B cell (primary cell): ENCODE measurements at regions of chr2 and their contacts with region 1.

Region 1: DNA sequence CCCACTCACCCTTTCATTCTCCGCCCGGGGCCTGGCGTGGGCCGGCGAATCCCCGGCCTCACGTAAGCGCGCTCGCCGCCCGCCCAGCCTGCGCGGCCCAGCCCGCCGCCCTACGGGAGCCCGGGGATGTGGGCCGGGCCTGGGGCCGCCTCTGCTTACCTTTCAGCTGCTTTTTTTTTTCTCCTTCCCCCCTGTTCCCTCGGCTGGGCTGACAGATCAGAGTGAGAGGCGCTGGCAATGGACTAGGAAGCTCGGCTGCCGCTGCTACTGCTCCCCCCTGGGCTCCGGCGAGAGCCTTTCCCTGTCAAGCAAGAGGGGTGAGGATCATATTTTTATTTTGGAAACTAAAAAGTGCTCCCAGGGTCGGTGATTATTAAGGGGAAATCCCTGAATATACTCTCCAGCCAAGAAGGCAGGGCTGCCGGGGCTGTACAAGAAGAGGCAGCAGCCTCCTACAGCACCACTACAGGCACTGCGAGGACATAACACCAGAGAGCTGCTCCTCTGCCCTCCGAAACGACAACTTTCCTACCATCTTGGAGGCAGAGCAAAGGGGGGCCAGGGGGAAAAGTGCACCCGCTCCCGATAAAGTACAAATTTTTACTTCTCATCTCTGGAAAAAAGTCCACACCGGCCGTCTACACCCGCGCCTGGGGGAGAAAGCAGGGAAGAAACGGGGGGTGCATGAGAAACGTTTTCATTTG is at the start of gene INO80D:
- DNase-seq: peak; percentile 91
- ATAC-seq: peak; percentile 84
- H3K4me3 ChIP-seq: peak within 1 kb of the TSS; percentile 68 to 95 (median 88)
- H3K4me3 Mint-ChIP-seq: peak within 1 kb of the TSS; percentile 99
- H3K27ac ChIP-seq: peak within 1 kb of the TSS; percentile 96 to 97
- H3K27ac Mint-ChIP-seq: peak within 1 kb of the TSS; percentile 100
- H3K4me1 ChIP-seq: peaks cover 19% of the 10 kb centered on the region in 2 donors
- H3K4me1 Mint-ChIP-seq: peaks cover 43% of the 10 kb centered on the region
- H3K27me3 ChIP-seq: no peaks in the 10 kb centered on the region
- H3K27me3 Mint-ChIP-seq: no peaks in the 10 kb centered on the region
- CTCF ChIP-seq: peak; percentile 67
- total RNA-seq, gene INO80D: 61.2 and 69.1 TPM in 2 replicates

Region 2: DNA sequence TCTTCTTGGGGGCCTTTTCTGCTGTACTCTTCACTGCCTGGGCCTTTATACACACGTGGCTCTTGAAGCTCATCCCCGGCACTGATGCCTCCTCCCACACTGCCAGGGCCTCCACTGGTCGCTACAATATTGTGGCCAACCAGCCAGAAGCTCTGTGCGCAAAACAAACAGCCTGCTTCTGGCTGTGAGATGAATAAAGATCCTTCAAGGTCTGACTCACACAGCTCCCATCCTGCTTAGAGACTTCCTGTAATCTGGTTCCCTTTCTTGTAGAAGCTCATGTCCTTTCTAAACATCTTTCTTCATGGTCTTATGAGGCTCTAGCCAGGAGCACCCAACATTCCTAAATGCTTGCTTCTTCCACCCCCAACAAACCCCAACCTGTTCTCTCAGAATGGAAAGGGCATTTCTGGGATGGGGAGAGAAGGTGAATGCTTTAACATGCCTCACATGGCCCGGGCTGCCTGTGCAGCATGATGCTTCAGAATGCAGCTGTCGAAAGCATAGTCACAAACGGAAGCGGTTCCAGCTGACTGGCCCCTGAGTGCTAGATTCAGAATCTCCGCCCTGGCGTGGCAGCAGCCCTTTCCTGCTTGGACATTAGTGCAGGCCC is 379.0 kb before region 1 on chr2:
- CTCF ChIA-PET with region 1: no interaction called
- POLR2A ChIA-PET with region 1: interaction called, 4 read pairs
- intact Hi-C with region 1: loop called (anchors 5 kb)
- DNase-seq: peak; percentile 86
- ATAC-seq: peak; percentile 95
- H3K4me3 ChIP-seq: peak overlapping the region in 3 of 5 experiments; percentile 25 to 41 (median 30)
- H3K4me3 Mint-ChIP-seq: peak overlapping the region; percentile 84
- H3K27ac ChIP-seq: peak overlapping the region; percentile 86 to 93
- H3K27ac Mint-ChIP-seq: peak overlapping the region; percentile 99
- H3K4me1 ChIP-seq: peaks cover 41 to 45% of the 10 kb centered on the region in 2 donors
- H3K4me1 Mint-ChIP-seq: peaks cover 61% of the 10 kb centered on the region
- H3K27me3 ChIP-seq: no peaks in the 10 kb centered on the region
- H3K27me3 Mint-ChIP-seq: no peaks in the 10 kb centered on the region
- CTCF ChIP-seq: no peak

Region 3: GRCh38 chr2:205925373-205926337 is 160.2 kb before region 1 on chr2:
- CTCF ChIA-PET with region 1: no interaction called
- POLR2A ChIA-PET with region 1: no interaction called
- intact Hi-C with region 1: no loop called
- DNase-seq: peak; percentile 66
- ATAC-seq: peak; percentile 53
- H3K4me3 ChIP-seq: no peak overlapping the region
- H3K4me3 Mint-ChIP-seq: no peak overlapping the region
- H3K27ac ChIP-seq: no peak overlapping the region
- H3K27ac Mint-ChIP-seq: no peak overlapping the region
- H3K4me1 ChIP-seq: peaks cover 6 to 7% of the 10 kb centered on the region in 2 donors
- H3K4me1 Mint-ChIP-seq: peaks cover 6% of the 10 kb centered on the region
- H3K27me3 ChIP-seq: peaks cover 0 to 23% (median 14%) of the 10 kb centered on the region in 4 experiments
- H3K27me3 Mint-ChIP-seq: peaks cover 44% of the 10 kb centered on the region
- CTCF ChIP-seq: peak; percentile 76

Region 4: GRCh38 chr2:206031162-206031784 is 54.6 kb before region 1 on chr2:
- CTCF ChIA-PET with region 1: interaction called, 5 read pairs
- POLR2A ChIA-PET with region 1: interaction called, 5 read pairs
- intact Hi-C with region 1: loop called (anchors 5 kb)
- DNase-seq: no peak
- ATAC-seq: no peak
- H3K4me3 ChIP-seq: no peak overlapping the region
- H3K4me3 Mint-ChIP-seq: no peak overlapping the region
- H3K27ac ChIP-seq: no peak overlapping the region
- H3K27ac Mint-ChIP-seq: no peak overlapping the region
- H3K4me1 ChIP-seq: no peaks in the 10 kb centered on the region
- H3K4me1 Mint-ChIP-seq: peaks cover 26% of the 10 kb centered on the region
- H3K27me3 ChIP-seq: no peaks in the 10 kb centered on the region
- H3K27me3 Mint-ChIP-seq: no peaks in the 10 kb centered on the region
- CTCF ChIP-seq: no peak

Region 5: DNA sequence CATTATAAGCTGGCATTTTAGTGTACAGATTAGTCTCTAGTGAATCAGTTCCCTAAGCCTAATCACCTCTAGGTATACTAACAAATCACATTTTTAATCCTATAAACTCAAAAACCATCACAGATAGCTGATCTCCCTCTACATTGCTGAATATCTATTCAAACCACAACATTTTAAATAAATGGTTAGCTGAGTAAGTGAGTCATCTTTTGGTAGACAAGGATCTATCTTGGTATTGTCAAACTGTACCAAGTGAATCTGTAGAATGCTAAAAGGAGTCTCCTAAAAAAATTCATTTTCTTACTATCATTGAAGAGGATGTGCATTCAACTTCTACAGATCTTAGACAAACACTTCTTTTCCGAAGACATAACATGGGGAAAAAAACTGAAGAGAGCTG is 40.6 kb before region 1 on chr2:
- CTCF ChIA-PET with region 1: no interaction called
- POLR2A ChIA-PET with region 1: no interaction called
- intact Hi-C with region 1: no loop called
- DNase-seq: no peak
- ATAC-seq: no peak
- H3K4me3 ChIP-seq: no peak overlapping the region
- H3K4me3 Mint-ChIP-seq: no peak overlapping the region
- H3K27ac ChIP-seq: no peak overlapping the region
- H3K27ac Mint-ChIP-seq: no peak overlapping the region
- H3K4me1 ChIP-seq: no peaks in the 10 kb centered on the region
- H3K4me1 Mint-ChIP-seq: peaks cover 4% of the 10 kb centered on the region
- H3K27me3 ChIP-seq: no peaks in the 10 kb centered on the region
- H3K27me3 Mint-ChIP-seq: no peaks in the 10 kb centered on the region
- CTCF ChIP-seq: no peak

Region 6: GRCh38 chr2:206249714-206250591 is 164.1 kb after region 1 on chr2:
- CTCF ChIA-PET with region 1: no interaction called
- POLR2A ChIA-PET with region 1: interaction called, 11 read pairs
- intact Hi-C with region 1: loop called (anchors 10 kb)
- DNase-seq: peak; percentile 38
- ATAC-seq: no peak
- H3K4me3 ChIP-seq: peak overlapping the region; percentile 16 to 43 (median 39)
- H3K4me3 Mint-ChIP-seq: peak overlapping the region; percentile 85
- H3K27ac ChIP-seq: no peak overlapping the region
- H3K27ac Mint-ChIP-seq: peak overlapping the region; percentile 5
- H3K4me1 ChIP-seq: peaks cover 12 to 30% of the 10 kb centered on the region in 2 donors
- H3K4me1 Mint-ChIP-seq: peaks cover 26% of the 10 kb centered on the region
- H3K27me3 ChIP-seq: peaks cover 0 to 37% (median 26%) of the 10 kb centered on the region in 4 experiments
- H3K27me3 Mint-ChIP-seq: peaks cover 38% of the 10 kb centered on the region
- CTCF ChIP-seq: no peak

Region 7: DNA sequence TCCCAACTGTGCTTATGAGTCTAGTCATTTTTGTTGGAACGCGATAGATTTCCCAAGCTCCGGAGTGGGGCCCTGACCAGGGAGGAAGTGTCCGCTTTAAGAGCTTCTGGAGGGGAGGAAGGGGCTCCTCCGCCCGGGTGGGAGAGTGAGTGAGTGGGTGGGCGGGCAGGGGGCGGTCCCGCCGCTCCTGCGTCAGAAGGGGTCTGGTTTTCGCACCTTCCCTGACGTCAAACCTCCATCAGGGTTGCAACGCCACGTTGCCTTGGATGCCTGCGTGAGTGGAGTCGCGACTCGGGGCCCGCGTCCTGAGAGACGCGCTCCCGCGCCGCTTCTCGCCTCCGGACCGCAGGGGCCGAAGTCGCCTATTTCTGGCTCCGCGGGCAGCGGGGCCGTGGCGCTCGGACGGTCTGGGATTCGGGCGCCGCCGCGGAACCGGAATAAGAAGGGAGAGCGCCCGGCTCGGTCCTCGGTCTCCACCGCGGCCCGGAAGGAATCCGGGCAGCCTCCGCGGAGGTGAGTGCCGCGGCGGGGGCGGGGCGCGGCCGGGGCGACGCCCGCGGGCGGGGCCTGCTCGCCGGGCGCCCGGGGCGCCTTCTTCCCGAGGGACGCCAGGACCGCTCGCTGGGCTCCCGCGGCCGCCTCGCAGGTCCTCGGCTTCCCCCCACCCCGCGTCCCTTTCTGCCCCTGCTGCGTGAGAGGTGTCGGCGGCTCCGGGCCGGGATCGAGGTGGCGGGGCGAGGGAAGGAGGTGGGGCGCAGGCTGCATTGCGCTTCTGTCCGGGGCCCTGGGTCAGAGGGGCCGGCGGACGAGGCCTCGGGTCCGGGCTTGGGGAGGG is 188.8 kb after region 1 on chr2 and contains the start of gene ZDBF2:
- CTCF ChIA-PET with region 1: no interaction called
- POLR2A ChIA-PET with region 1: no interaction called
- intact Hi-C with region 1: loop called (anchors 10 kb)
- DNase-seq: peak; percentile 76
- ATAC-seq: peak; percentile 83
- H3K4me3 ChIP-seq: peak within 1 kb of the TSS; percentile 66 to 70 (median 67)
- H3K4me3 Mint-ChIP-seq: peak within 1 kb of the TSS; percentile 77
- H3K27ac ChIP-seq: peak within 1 kb of the TSS; percentile 39 to 78
- H3K27ac Mint-ChIP-seq: peak within 1 kb of the TSS; percentile 79
- H3K4me1 ChIP-seq: peaks cover 19 to 22% of the 10 kb centered on the region in 2 donors
- H3K4me1 Mint-ChIP-seq: peaks cover 18% of the 10 kb centered on the region
- H3K27me3 ChIP-seq: peaks cover 0 to 55% (median 24%) of the 10 kb centered on the region in 4 experiments
- H3K27me3 Mint-ChIP-seq: peaks cover 50% of the 10 kb centered on the region
- CTCF ChIP-seq: no peak
- total RNA-seq, gene ZDBF2: 16.5 and 18.7 TPM in 2 replicates

Region 8: GRCh38 chr2:206765242-206766056 is 679.6 kb after region 1 on chr2 and contains the starts of genes FASTKD2 and MDH1B:
- CTCF ChIA-PET with region 1: no interaction called
- POLR2A ChIA-PET with region 1: interaction called, 3 read pairs
- intact Hi-C with region 1: loop called (anchors 10 kb)
- DNase-seq: peak; percentile 96
- ATAC-seq: peak; percentile 85
- H3K4me3 ChIP-seq: peak within 1 kb of the TSS; percentile 63 to 96 (median 87)
- H3K4me3 Mint-ChIP-seq: peak within 1 kb of the TSS; percentile 99
- H3K27ac ChIP-seq: peak within 1 kb of the TSS; percentile 77 to 92
- H3K27ac Mint-ChIP-seq: peak within 1 kb of the TSS; percentile 97
- H3K4me1 ChIP-seq: peaks cover 14% of the 10 kb centered on the region in 2 donors
- H3K4me1 Mint-ChIP-seq: peaks cover 32% of the 10 kb centered on the region
- H3K27me3 ChIP-seq: peaks cover 0 to 17% (median 6%) of the 10 kb centered on the region in 4 experiments
- H3K27me3 Mint-ChIP-seq: no peaks in the 10 kb centered on the region
- CTCF ChIP-seq: no peak
- total RNA-seq, gene FASTKD2: 20.6 and 24.5 TPM in 2 replicates
- total RNA-seq, gene MDH1B: 0.34 TPM in 1 of 2 replicates, not detected in the other